ENCODE measurements at regions of chr12 and their contacts with region 1.

Region 1: DNA sequence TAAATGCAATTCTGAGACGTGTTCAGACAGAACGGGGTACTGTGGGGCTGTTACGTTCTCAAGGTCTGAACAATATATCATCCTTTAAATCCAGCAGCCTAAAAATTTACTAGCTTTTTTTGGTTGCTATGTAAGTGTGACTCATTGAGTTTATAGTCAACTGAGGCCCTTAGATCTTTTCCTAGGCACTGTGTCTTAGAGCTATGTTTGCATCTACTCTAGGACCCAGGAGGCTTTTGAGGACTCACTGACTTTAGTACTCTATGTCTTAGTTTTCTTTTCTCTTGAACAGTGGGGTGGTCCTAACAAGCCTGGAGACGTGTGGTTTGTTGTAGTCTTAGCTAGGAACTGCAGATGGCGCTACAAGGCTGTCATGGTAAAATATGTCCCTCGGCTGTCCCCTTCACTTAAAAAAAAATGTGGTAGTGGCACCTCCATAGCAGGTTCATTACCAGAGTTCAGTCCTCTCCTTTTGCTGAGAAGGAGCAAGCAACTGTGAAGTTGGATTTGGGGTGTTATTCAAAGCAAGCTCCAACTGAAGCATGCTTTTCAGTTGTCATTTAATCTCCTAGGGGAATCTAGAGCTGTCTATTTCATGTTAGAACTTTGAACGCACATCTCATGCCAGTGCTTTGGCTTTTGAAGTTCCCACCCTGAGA is 8.7 kb upstream of the SPATS2 start:
- DNase-seq: peak; percentile 67
- ATAC-seq: peak; percentile 99
- H3K4me3 Mint-ChIP-seq: no peak overlapping the region
- H3K27ac Mint-ChIP-seq: no peak overlapping the region
- H3K4me1 Mint-ChIP-seq: no peaks in the 10 kb centered on the region
- H3K27me3 Mint-ChIP-seq: peaks cover 3% of the 10 kb centered on the region; the same call in 1 of the 2 replicates
- CTCF ChIP-seq: peak; percentile 65

Region 2: GRCh38 chr12:49212572-49212971 is 146.0 kb before region 1 on chr12:
- CTCF ChIA-PET with region 1: no interaction called
- POLR2A ChIA-PET with region 1: no interaction called
- DNase-seq: no peak
- ATAC-seq: no peak
- H3K4me3 Mint-ChIP-seq: no peak overlapping the region
- H3K27ac Mint-ChIP-seq: no peak overlapping the region
- H3K4me1 Mint-ChIP-seq: peaks cover 14% of the 10 kb centered on the region
- H3K27me3 Mint-ChIP-seq: no peaks in the 10 kb centered on the region; the same call in 1 of the 2 replicates
- CTCF ChIP-seq: no peak

Region 3: DNA sequence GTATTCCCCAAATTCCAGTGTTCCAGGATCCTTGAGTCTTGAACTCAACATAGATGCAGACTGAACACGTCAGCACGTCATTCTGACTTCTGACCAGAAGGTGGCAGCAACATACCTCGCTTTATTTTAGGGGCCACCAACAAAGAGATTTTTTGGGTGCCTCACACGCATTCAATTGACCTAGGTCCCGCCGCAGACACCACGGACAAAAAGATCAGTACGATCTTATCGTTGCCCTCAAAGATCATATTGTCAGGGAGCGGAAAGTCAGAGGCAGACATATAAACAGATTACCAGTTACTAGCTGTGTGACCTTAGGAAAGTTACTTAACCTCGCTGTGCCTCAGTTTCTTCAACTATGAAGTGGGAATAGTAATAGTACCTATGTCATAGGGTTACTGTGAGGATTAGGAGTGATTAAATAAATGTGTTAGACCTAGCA is 70.2 kb before region 1 on chr12:
- CTCF ChIA-PET with region 1: interaction called, 25 read pairs
- POLR2A ChIA-PET with region 1: no interaction called
- DNase-seq: peak; percentile 76
- ATAC-seq: peak; percentile 48
- H3K4me3 Mint-ChIP-seq: no peak overlapping the region
- H3K27ac Mint-ChIP-seq: no peak overlapping the region
- H3K4me1 Mint-ChIP-seq: peaks cover 17% of the 10 kb centered on the region
- H3K27me3 Mint-ChIP-seq: peaks cover 59% of the 10 kb centered on the region
- CTCF ChIP-seq: peak; percentile 80

Region 4: DNA sequence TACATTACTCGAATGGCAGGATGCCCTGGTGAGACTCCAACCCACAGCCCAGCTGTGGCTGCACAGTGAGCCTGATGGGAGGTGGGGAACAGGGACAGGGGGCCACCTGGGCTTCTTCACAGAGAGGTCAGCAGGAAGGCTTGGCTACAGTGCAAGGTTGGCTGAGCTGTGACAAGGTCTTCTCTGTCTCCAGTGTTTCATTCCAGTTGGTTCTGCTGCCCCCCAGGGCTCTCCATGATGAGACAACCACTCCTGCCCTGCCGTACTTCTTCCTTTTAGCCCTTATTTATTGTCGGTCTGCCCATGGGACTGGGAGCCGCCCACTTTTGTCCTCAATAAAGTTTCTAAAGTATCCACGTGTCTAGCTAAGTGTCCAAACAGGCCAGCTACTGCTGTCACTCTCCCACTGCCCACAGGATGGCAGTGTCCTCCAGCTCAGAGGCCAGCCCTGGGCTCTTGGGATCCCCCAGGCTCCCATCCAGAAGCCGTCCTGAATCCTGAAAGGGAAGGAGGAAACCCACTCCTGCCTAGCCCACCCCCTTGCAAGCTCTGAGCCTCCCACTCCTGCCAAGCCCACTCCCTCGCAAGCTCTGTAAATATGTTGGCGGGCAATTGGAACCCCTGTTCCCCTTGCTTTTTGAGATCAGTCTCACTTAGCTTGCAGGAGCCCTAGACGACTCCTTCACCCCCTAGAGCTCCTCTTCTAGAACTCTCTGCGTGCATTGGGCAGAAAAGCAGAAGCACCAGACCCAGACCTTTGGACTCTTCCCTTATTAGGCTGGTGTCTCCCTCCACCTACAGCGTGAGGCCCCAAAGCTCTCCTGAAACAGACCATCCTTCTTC is 27.0 kb before region 1 on chr12:
- CTCF ChIA-PET with region 1: interaction called, 43 read pairs
- POLR2A ChIA-PET with region 1: interaction called, 3 read pairs
- DNase-seq: peak; percentile 77
- ATAC-seq: peak; percentile 76
- H3K4me3 Mint-ChIP-seq: peak overlapping the region; percentile 77; the same call in 1 of the 2 replicates
- H3K27ac Mint-ChIP-seq: no peak overlapping the region
- H3K4me1 Mint-ChIP-seq: peaks cover 20% of the 10 kb centered on the region
- H3K27me3 Mint-ChIP-seq: peaks cover 52% of the 10 kb centered on the region
- CTCF ChIP-seq: peak; percentile 42; the same call in 1 of the 2 replicates

Region 5: DNA sequence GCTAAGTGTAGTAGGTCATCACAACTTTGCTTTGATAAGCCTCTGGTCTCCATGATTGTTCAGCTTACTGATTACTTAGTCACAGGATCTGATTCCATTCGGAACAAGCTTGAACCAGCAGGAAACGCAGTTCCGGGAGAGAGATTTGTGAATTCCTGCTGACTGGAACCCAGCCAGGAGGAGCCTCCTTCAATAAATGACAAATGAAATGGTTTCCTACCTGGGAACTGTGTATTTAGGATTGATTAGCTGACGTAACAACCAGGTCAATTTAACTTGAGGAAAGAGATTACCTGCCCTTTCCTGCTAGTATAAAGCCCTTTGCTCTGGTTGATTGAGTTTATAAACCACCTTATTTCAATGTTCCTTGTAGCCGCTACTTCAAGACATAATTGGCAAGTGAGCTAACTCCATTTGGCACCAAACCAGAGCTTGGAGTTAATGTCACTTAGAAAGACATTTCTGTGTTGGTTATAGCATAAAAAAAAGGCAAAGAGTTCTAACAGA is 145.1 kb after region 1 on chr12:
- CTCF ChIA-PET with region 1: interaction called, 141 read pairs
- POLR2A ChIA-PET with region 1: no interaction called
- DNase-seq: no peak
- ATAC-seq: no peak
- H3K4me3 Mint-ChIP-seq: no peak overlapping the region
- H3K27ac Mint-ChIP-seq: no peak overlapping the region
- H3K4me1 Mint-ChIP-seq: no peaks in the 10 kb centered on the region
- H3K27me3 Mint-ChIP-seq: no peaks in the 10 kb centered on the region
- CTCF ChIP-seq: no peak

Region 6: GRCh38 chr12:49527361-49528130 is 168.9 kb after region 1 on chr12:
- CTCF ChIA-PET with region 1: interaction called, 25 read pairs
- POLR2A ChIA-PET with region 1: interaction called, 4 read pairs
- DNase-seq: no peak
- ATAC-seq: no peak
- H3K4me3 Mint-ChIP-seq: no peak overlapping the region
- H3K27ac Mint-ChIP-seq: peak overlapping the region; percentile 63; the same call in 1 of the 2 replicates
- H3K4me1 Mint-ChIP-seq: peaks cover 8% of the 10 kb centered on the region
- H3K27me3 Mint-ChIP-seq: no peaks in the 10 kb centered on the region
- CTCF ChIP-seq: no peak

Measured in WTC11 (cell line).